Posterior vena cava (tissue), 2 donors: ENCODE measurements at regions of chrX and their contacts with region 1.

Region 1: DNA sequence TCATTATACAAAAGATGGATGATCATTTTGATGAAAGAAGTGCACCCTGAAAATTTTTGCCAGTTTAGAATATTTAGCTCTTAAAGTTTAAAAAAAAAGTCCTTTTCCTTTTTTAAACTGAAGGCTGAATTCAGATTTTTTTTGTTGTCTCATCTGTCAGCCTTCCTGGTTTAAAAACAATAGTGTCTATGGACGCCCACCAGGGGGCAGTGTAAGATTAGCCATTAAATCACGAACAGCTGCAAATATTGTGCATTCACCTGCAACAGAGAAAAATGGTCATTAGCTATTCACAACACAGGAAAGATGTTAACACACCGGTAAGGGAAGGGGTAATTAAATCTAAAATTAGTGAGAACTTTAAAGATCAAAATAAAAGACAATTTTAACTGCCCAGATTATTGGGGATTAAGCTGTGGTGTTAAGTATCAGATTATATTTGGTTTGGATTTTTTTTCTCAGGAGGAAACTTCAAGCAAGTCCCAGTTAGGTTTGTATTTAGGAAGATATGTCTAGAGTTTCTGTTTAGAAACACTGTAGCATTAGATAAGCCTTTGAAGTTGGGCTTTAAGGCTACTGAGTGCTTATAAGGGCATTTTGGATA is 4.4 kb upstream of the CXorf38 start:
- DNase-seq: no peak

Region 2: DNA sequence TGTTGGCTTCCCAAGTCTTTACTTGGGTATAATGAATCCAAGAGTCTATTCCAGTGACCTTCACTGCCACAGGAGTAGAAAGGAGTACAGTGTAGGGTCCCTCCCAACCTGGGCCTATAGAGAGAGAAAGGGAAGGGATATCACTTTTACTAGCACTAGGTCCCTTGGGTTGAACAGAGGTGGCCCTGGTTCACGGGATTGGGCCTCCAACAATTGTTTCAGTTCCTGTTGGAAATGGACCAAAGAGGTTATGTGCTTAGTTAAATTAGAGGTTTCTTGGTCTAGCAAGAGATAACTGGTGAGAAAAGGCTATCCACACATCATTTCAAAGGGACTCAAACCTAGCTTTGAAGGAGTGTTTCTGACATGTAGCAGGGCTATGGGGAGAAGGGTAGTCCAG is 140.7 kb after region 1 on chrX:
- intact Hi-C with region 1: loop called in 1 of 2 experiments (anchors 10 kb)
- DNase-seq: no peak

Region 3: DNA sequence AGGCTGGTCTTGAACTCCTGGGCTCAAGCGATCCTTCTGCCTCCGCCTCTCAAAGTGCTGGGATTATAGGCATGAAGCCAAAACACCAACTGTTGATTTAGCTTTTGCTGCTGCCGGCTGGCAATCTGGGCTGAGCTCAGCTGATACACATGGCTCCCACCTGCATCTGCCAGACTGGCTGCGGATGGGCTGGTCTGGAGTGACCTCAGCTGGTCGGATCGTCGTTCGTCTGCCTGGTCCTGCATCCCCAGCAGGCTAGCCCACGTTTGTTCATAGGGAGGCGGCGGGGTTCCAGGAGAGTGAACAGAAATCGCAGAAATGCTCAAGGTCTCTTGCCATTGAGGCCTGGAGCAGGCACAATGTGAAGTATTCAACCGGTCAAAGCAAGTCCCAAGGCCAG is 607.8 kb after region 1 on chrX:
- intact Hi-C with region 1: loop called in 1 of 2 experiments (anchors 10 kb)
- DNase-seq: peak; percentile 77